ENCODE measurements at regions of chr5 and their contacts with region 1.

Region 1: GRCh38 chr5:33321026-33321425 is 119.7 kb upstream of the TARS1 start:
- DNase-seq: peak; percentile 98
- H3K4me3 ChIP-seq: peak overlapping the region in 1 of 3 experiments; percentile 13
- H3K27ac ChIP-seq: peak overlapping the region; percentile 98
- H3K4me1 ChIP-seq: peaks cover 34% of the 10 kb centered on the region
- H3K27me3 ChIP-seq: no peaks in the 10 kb centered on the region
- CTCF ChIP-seq: no peak
- POLR2A ChIP-seq: no peak

Region 2: DNA sequence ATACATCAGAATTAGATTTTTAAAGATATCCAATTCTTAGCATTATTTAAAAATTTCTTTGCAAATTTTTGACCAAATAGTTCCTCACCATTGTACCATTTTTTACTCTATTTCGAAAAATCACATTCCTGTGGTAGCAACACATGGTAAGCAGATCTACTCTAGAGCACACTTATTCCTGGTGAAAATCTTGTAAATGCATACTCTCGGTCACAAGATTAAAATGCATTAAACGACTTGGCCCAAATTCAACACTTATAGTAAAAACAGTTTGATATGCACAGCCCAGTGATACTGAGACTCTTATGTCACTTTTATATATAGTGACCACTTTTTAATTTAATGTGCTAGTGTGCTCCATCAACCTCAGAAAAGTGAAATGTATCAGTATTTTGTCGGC is 89.1 kb before region 1 on chr5:
- CTCF ChIA-PET with region 1: no interaction called
- POLR2A ChIA-PET with region 1: no interaction called
- dilution Hi-C with region 1: no loop called
- intact Hi-C with region 1: loop called (anchors 2 kb)
- DNase-seq: no peak
- H3K4me3 ChIP-seq: no peak overlapping the region
- H3K27ac ChIP-seq: no peak overlapping the region
- H3K4me1 ChIP-seq: peaks cover 20% of the 10 kb centered on the region
- H3K27me3 ChIP-seq: no peaks in the 10 kb centered on the region
- CTCF ChIP-seq: no peak
- POLR2A ChIP-seq: no peak

Region 3: DNA sequence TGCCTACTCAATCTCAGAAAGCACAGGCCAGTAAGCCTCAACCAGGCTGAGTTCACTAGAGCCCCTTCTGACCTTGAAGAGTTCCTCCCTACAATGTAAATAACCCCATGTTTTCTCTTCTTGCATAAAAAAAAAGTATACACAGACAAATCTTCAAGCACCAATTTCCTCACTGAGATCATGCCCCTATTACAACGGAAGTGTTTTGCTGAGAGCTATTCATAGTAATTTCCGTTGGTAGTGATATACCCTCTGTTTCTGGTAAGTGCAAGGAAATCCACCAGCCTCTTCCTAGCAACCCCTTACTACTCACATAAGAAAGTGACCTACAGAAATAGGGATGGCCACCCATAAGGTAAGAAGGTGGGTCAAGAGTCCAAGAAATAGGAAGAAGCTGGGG is 43.4 kb after region 1 on chr5:
- CTCF ChIA-PET with region 1: interaction called, 3 read pairs
- POLR2A ChIA-PET with region 1: no interaction called
- dilution Hi-C with region 1: no loop called
- intact Hi-C with region 1: loop called (anchors 1 kb)
- DNase-seq: peak; percentile 88
- H3K4me3 ChIP-seq: peak overlapping the region in 1 of 3 experiments; percentile 5
- H3K27ac ChIP-seq: peak overlapping the region; percentile 42
- H3K4me1 ChIP-seq: peaks cover 36% of the 10 kb centered on the region
- H3K27me3 ChIP-seq: no peaks in the 10 kb centered on the region
- CTCF ChIP-seq: no peak
- POLR2A ChIP-seq: no peak